ENCODE measurements at regions of chr1 and their contacts with region 1.

Region 1: GRCh38 chr1:152001391-152002249 is 8.0 kb upstream of the S100A10 start:
- DNase-seq: peak; percentile 88 to 89
- ATAC-seq: peak; percentile 74 to 87 (median 76)
- H3K4me3 ChIP-seq: no peak overlapping the region
- H3K27ac ChIP-seq: peak overlapping the region; percentile 18
- H3K4me1 ChIP-seq: peaks cover 3% of the 10 kb centered on the region
- H3K27me3 ChIP-seq: peaks cover 0 to 11% (median 0%) of the 10 kb centered on the region in 3 donors
- CTCF ChIP-seq: peak; percentile 88

Region 2: DNA sequence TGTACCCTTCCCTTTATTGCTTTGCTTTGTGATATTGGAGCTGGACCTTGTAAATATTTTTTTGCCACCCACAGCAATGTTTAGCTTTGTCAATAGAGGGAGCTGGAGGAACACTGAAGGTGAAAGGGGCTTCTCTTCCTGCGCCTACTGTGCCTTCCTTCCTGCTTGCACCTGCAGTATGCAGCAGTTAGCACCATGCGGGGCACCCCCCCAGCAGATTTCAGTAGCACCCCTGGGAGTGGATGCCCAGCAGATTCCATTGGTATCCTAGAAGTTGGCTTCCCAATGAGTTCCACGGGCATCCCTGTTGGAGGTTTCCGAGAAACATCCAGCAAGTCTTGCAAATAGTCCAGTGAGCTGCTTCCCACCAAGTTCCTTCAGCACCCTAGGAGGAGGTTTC is 33.6 kb before region 1 on chr1:
- intact Hi-C with region 1: loop called in 1 of 2 experiments (anchors 2 kb)
- DNase-seq: no peak
- ATAC-seq: peak in 3 of 4 donors; percentile 47 to 67 (median 58)
- H3K4me3 ChIP-seq: no peak overlapping the region
- H3K27ac ChIP-seq: no peak overlapping the region
- H3K4me1 ChIP-seq: peaks cover 2% of the 10 kb centered on the region
- H3K27me3 ChIP-seq: peaks cover 0 to 8% (median 0%) of the 10 kb centered on the region in 3 donors
- CTCF ChIP-seq: peak; percentile 48

Region 3: GRCh38 chr1:152220166-152221163 is 218.8 kb after region 1 on chr1:
- intact Hi-C with region 1: no loop called
- DNase-seq: no peak
- ATAC-seq: no peak
- H3K4me3 ChIP-seq: no peak overlapping the region
- H3K27ac ChIP-seq: no peak overlapping the region
- H3K4me1 ChIP-seq: no peaks in the 10 kb centered on the region
- H3K27me3 ChIP-seq: peaks cover 0 to 5% (median 0%) of the 10 kb centered on the region in 3 donors
- CTCF ChIP-seq: no peak